ENCODE measurements at regions of chr17 and their contacts with region 1.

Region 1: DNA sequence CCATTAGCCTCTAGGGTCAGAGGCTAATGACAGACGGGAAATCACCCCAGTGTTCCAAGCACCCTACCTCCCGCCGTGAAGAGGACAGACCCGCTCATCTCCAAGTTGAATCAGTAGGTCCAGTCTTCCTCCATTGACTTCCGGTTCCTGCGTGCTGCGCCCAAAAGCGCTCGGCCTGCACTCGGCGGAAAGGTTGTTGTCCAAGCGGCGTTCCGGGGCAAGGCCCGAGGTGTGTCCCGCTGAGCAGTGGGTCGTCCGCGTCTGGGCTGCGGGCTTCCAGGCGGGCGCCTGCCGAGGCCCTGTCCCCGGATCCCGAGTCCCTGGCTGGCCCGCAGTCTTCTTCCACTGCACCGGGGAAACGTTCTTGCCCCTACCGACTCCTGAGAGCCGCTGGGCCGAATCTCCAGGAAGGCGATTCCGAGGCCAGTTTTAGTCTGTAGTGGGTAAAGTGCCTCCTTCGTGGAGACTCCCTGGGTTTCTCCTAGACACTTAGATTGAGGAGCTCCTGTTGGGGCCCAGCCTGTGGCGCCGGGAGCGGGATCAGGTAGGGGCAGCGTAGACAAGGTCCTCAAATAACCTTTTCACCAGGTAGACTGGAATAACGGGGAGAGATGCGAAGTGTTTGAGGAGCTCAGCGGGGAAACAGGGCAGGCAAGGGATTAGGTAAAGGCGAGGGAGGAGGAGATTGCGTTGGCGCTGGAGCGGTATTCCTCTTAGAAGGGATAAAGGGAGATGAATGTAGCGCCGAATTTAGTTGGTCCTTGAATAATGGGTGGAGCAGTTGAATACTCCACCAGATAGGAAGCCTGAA is at the start of gene TEFM:
- DNase-seq: peak; percentile 86
- H3K4me3 Mint-ChIP-seq: peak within 1 kb of the TSS; percentile 97
- H3K27ac Mint-ChIP-seq: peak within 1 kb of the TSS; percentile 88
- H3K4me1 Mint-ChIP-seq: peaks cover 30% of the 10 kb centered on the region
- H3K27me3 Mint-ChIP-seq: no peaks in the 10 kb centered on the region
- total RNA-seq, gene TEFM: 16.6 and 21.2 TPM in 2 replicates

Region 2: GRCh38 chr17:30858561-30859245 is 47.6 kb before region 1 on chr17:
- intact Hi-C with region 1: no loop called
- DNase-seq: no peak
- H3K4me3 Mint-ChIP-seq: no peak overlapping the region
- H3K27ac Mint-ChIP-seq: no peak overlapping the region
- H3K4me1 Mint-ChIP-seq: no peaks in the 10 kb centered on the region
- H3K27me3 Mint-ChIP-seq: no peaks in the 10 kb centered on the region

Region 3: DNA sequence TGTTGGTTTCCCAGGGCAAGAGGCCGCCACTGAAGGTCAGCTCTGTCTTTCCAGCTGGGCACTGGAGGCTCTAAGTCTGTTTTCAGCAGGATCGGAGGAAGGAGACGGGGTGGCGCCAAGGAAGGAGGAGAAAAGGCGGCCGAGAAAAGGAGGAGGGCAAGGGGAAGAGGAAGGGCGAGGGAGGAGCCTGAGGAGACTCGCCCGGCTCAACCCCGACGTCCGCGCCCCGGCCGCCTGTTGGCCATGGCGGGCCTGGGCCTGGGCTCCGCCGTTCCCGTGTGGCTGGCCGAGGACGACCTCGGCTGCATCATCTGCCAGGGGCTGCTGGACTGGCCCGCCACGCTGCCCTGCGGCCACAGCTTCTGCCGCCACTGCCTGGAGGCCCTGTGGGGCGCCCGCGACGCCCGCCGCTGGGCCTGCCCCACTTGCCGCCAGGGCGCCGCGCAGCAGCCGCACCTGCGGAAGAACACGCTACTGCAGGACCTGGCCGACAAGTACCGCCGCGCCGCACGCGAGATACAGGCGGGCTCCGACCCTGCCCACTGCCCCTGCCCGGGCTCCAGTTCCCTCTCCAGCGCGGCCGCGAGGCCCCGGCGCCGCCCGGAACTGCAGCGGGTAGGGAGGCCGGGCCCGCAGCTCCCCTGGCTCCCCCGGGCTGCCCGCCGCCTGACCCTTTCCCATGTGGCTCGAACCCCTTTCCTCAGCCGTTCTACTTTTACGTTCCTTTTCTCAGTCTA is 64.7 kb after region 1 on chr17 and contains the start of gene RNF135:
- intact Hi-C with region 1: loop called (anchors 5 kb)
- DNase-seq: peak; percentile 64
- H3K4me3 Mint-ChIP-seq: peak within 1 kb of the TSS; percentile 97
- H3K27ac Mint-ChIP-seq: peak within 1 kb of the TSS; percentile 96
- H3K4me1 Mint-ChIP-seq: peaks cover 27% of the 10 kb centered on the region
- H3K27me3 Mint-ChIP-seq: no peaks in the 10 kb centered on the region
- total RNA-seq, gene RNF135: 9.2 and 10.5 TPM in 2 replicates

Region 4: DNA sequence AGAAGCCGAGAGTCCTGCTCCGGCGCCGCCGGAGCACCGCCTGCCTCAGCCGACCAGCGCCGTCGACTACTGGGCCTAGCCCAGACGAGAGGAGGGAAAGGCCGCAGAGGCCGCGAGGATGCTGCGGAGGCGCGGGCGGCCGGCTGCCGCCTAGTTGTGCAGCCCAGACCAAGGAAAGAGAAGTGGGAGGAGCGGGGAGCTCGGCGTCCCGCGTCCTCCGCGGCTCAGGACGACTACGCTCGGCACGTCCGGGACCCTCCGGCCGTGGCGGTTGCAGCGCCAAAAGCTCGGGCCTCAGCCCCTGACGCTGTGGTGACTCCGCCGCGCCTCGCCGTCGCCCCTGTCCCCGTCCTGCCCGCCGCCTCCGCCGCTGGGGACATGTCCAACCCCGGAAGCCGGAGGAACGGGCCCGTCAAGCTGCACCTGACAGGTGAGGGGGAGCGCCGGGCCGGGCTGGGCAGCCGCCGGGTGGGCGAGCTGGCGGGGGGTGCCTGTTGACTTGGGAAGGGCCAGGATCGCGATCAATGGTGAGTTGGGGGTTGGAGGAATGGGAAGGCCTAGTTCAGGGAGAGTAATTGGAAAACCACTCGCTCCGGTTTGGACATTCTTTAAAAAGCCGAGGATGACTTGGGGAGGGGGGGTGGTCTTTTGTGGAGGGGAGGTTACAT is 102.2 kb after region 1 on chr17:
- intact Hi-C with region 1: loop called (anchors 5 kb)
- DNase-seq: peak; percentile 29
- H3K4me3 Mint-ChIP-seq: peak overlapping the region; percentile 79
- H3K27ac Mint-ChIP-seq: peak overlapping the region; percentile 46
- H3K4me1 Mint-ChIP-seq: peaks cover 13% of the 10 kb centered on the region
- H3K27me3 Mint-ChIP-seq: peaks cover 22% of the 10 kb centered on the region

Region 5: DNA sequence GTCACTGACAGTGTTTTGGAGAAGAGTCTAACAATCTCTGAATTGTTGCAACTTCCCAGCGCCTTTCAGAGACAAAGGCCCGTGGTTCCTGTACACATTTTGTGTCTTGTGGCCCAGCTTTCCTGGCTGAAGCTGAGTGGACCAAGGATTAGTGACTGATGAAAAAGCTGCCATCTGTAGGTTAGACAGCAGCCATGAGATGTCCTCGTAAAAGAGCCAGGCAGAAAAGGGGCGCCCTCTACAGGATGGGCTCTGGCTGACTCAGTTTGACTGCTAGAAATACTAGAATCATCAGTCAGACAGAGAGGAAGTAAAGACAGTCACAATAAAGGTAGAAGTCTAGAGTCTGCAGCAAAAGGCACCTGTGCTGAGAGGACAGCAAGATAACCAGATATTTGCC is 162.0 kb after region 1 on chr17:
- intact Hi-C with region 1: no loop called
- DNase-seq: peak; percentile 30
- H3K4me3 Mint-ChIP-seq: no peak overlapping the region
- H3K27ac Mint-ChIP-seq: no peak overlapping the region
- H3K4me1 Mint-ChIP-seq: peaks cover 9% of the 10 kb centered on the region
- H3K27me3 Mint-ChIP-seq: peaks cover 16% of the 10 kb centered on the region

Measured in activated T-helper 2 cell treated with anti-CD3 and anti-CD28 coated beads, Interferon-gamma antibody, Interleukin-2, Interleukin-4, amounts not matched to agents 10 μg/mL and 5 μg/mL and 100 μg/mL, durations not matched to agents 14 hours and 24 hours and 36 hours (primary cell).